ENCODE measurements at regions of chr10 and their contacts with region 1.

Region 1: GRCh38 chr10:44959247-44960087 is at the start of gene RASSF4:
- DNase-seq: peak; percentile 90
- ATAC-seq: peak; percentile 99
- H3K4me3 ChIP-seq: peak within 1 kb of the TSS; percentile 34 to 95 (median 85)
- H3K4me3 Mint-ChIP-seq: peak within 1 kb of the TSS; percentile 91
- H3K27ac ChIP-seq: peak within 1 kb of the TSS; percentile 49 to 75
- H3K27ac Mint-ChIP-seq: peak within 1 kb of the TSS; percentile 84
- H3K4me1 ChIP-seq: peaks cover 33 to 48% of the 10 kb centered on the region in 2 donors
- H3K4me1 Mint-ChIP-seq: peaks cover 47% of the 10 kb centered on the region
- H3K27me3 ChIP-seq: peaks cover 0 to 2% (median 0%) of the 10 kb centered on the region in 4 experiments
- H3K27me3 Mint-ChIP-seq: no peaks in the 10 kb centered on the region
- CTCF ChIP-seq: no peak
- total RNA-seq, gene RASSF4: 1.4 and 2.6 TPM in 2 replicates

Region 2: GRCh38 chr10:44647877-44648542 is 311.5 kb before region 1 on chr10:
- CTCF ChIA-PET with region 1: no interaction called
- POLR2A ChIA-PET with region 1: no interaction called
- intact Hi-C with region 1: no loop called
- DNase-seq: no peak
- ATAC-seq: no peak
- H3K4me3 ChIP-seq: no peak overlapping the region
- H3K4me3 Mint-ChIP-seq: no peak overlapping the region
- H3K27ac ChIP-seq: no peak overlapping the region
- H3K27ac Mint-ChIP-seq: no peak overlapping the region
- H3K4me1 ChIP-seq: no peaks in the 10 kb centered on the region
- H3K4me1 Mint-ChIP-seq: no peaks in the 10 kb centered on the region
- H3K27me3 ChIP-seq: no peaks in the 10 kb centered on the region
- H3K27me3 Mint-ChIP-seq: no peaks in the 10 kb centered on the region
- CTCF ChIP-seq: no peak

Region 3: GRCh38 chr10:44890696-44891563 is 68.5 kb before region 1 on chr10:
- CTCF ChIA-PET with region 1: no interaction called
- POLR2A ChIA-PET with region 1: no interaction called
- intact Hi-C with region 1: no loop called
- DNase-seq: no peak
- ATAC-seq: no peak
- H3K4me3 ChIP-seq: no peak overlapping the region
- H3K4me3 Mint-ChIP-seq: no peak overlapping the region
- H3K27ac ChIP-seq: no peak overlapping the region
- H3K27ac Mint-ChIP-seq: no peak overlapping the region
- H3K4me1 ChIP-seq: no peaks in the 10 kb centered on the region
- H3K4me1 Mint-ChIP-seq: peaks cover 5% of the 10 kb centered on the region
- H3K27me3 ChIP-seq: no peaks in the 10 kb centered on the region
- H3K27me3 Mint-ChIP-seq: peaks cover 11% of the 10 kb centered on the region
- CTCF ChIP-seq: no peak

Region 4: GRCh38 chr10:45000752-45001380 is 41.4 kb after region 1 on chr10 and contains the start of gene ZNF22:
- CTCF ChIA-PET with region 1: interaction called, 7 read pairs
- POLR2A ChIA-PET with region 1: interaction called, 3 read pairs
- intact Hi-C with region 1: loop called (anchors 2 kb)
- DNase-seq: peak; percentile 86
- ATAC-seq: peak; percentile 80
- H3K4me3 ChIP-seq: peak within 1 kb of the TSS; percentile 55 to 72 (median 66)
- H3K4me3 Mint-ChIP-seq: peak within 1 kb of the TSS; percentile 90
- H3K27ac ChIP-seq: peak within 1 kb of the TSS; percentile 74 to 85
- H3K27ac Mint-ChIP-seq: peak within 1 kb of the TSS; percentile 93
- H3K4me1 ChIP-seq: peaks cover 16% of the 10 kb centered on the region in 2 donors
- H3K4me1 Mint-ChIP-seq: peaks cover 26% of the 10 kb centered on the region
- H3K27me3 ChIP-seq: no peaks in the 10 kb centered on the region
- H3K27me3 Mint-ChIP-seq: no peaks in the 10 kb centered on the region
- CTCF ChIP-seq: no peak
- total RNA-seq, gene ZNF22: 31.4 TPM in 2 replicates

Region 5: GRCh38 chr10:45058580-45058979 is 99.1 kb after region 1 on chr10:
- CTCF ChIA-PET with region 1: no interaction called
- POLR2A ChIA-PET with region 1: no interaction called
- intact Hi-C with region 1: no loop called
- DNase-seq: no peak
- ATAC-seq: no peak
- H3K4me3 ChIP-seq: no peak overlapping the region
- H3K4me3 Mint-ChIP-seq: no peak overlapping the region
- H3K27ac ChIP-seq: no peak overlapping the region
- H3K27ac Mint-ChIP-seq: no peak overlapping the region
- H3K4me1 ChIP-seq: no peaks in the 10 kb centered on the region
- H3K4me1 Mint-ChIP-seq: no peaks in the 10 kb centered on the region
- H3K27me3 ChIP-seq: no peaks in the 10 kb centered on the region
- H3K27me3 Mint-ChIP-seq: peaks cover 16% of the 10 kb centered on the region
- CTCF ChIP-seq: no peak

Region 6: GRCh38 chr10:45198596-45199379 is 239.3 kb after region 1 on chr10:
- CTCF ChIA-PET with region 1: no interaction called
- POLR2A ChIA-PET with region 1: no interaction called
- intact Hi-C with region 1: no loop called
- DNase-seq: no peak
- ATAC-seq: no peak
- H3K4me3 ChIP-seq: no peak overlapping the region
- H3K4me3 Mint-ChIP-seq: no peak overlapping the region
- H3K27ac ChIP-seq: no peak overlapping the region
- H3K27ac Mint-ChIP-seq: no peak overlapping the region
- H3K4me1 ChIP-seq: no peaks in the 10 kb centered on the region
- H3K4me1 Mint-ChIP-seq: no peaks in the 10 kb centered on the region
- H3K27me3 ChIP-seq: no peaks in the 10 kb centered on the region
- H3K27me3 Mint-ChIP-seq: peaks cover under 1% of the 10 kb centered on the region
- CTCF ChIP-seq: no peak